Aorta (tissue), 5 donors: ENCODE measurements at regions of chr5 and their contacts with region 1.

Region 1: GRCh38 chr5:137310051-137310730 is 188.9 kb downstream of the SPOCK1 start:
- DNase-seq: no peak
- ATAC-seq: no peak
- H3K4me3 ChIP-seq: no peak overlapping the region
- H3K27ac ChIP-seq: no peak overlapping the region
- H3K4me1 ChIP-seq: no peaks in the 10 kb centered on the region
- H3K27me3 ChIP-seq: no peaks in the 10 kb centered on the region

Region 2: DNA sequence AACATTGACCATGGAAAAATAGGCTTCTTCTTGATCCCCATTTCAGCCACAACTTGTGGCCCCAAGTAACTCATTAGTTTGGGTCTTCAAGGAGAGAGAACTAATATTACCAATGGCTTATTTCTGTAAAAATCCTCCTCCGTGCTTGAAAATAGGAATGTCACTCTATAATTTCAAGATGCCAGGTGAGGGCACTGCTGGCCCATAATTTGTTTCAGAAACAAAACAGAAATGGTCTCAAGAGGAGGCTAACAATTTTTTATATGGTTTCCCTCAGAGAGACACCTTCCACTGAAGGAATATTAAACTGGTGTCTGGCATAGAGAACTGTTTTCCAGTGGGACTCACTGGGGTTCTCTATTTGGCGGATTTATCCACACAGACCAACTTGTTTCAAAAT is 507.8 kb before region 1 on chr5:
- intact Hi-C with region 1: loop called in 1 of 2 experiments (anchors 10 kb)
- DNase-seq: no peak
- ATAC-seq: no peak
- H3K4me3 ChIP-seq: no peak overlapping the region
- H3K27ac ChIP-seq: no peak overlapping the region
- H3K4me1 ChIP-seq: no peaks in the 10 kb centered on the region
- H3K27me3 ChIP-seq: no peaks in the 10 kb centered on the region

Region 3: DNA sequence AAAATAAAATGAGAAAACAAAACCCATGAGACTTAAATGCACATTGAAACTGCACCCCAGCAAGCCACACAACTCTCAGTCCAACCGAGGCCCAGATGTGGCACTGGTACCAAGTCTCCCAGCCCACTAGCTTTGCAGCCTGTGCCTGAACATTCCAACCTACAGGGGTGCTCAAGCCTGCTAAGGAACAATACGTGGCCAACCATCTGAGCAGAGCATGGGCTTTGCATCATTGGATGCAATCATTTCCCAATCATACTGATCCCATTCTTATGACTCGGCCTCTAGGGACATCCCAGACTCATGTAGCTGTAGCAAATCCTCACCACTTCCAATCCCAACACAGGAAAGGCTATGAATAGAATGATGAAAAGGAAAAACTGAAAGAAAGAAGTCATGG is 108.3 kb before region 1 on chr5:
- intact Hi-C with region 1: loop called in 1 of 2 experiments (anchors 5 kb)
- DNase-seq: peak in 1 of 2 donors; percentile 50
- ATAC-seq: peak; percentile 80
- H3K4me3 ChIP-seq: no peak overlapping the region
- H3K27ac ChIP-seq: no peak overlapping the region
- H3K4me1 ChIP-seq: no peaks in the 10 kb centered on the region
- H3K27me3 ChIP-seq: no peaks in the 10 kb centered on the region

Region 4: DNA sequence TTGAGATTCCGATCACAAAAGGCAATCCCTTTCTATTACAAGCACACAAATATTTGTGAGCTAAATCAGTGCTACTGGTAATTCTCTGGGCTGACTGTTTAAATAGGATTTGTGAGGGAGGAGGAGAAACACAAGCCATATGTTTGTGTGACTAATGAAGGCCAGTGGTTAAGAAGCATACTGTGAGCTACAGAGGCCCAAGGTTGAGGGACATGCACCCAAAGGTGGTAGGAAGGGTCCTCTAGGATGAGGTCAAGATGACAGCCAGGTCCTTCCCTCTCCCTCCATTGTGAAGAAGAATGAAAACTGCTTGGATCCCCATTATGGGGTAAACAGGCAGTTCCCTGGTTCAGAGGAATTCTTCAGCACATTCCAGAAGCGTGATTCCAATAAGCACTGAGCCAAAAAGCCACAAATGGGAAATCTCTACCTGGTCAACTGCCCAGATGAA is 105.1 kb after region 1 on chr5:
- intact Hi-C with region 1: no loop called
- DNase-seq: no peak
- ATAC-seq: no peak
- H3K4me3 ChIP-seq: no peak overlapping the region
- H3K27ac ChIP-seq: no peak overlapping the region
- H3K4me1 ChIP-seq: no peaks in the 10 kb centered on the region
- H3K27me3 ChIP-seq: no peaks in the 10 kb centered on the region

Region 5: DNA sequence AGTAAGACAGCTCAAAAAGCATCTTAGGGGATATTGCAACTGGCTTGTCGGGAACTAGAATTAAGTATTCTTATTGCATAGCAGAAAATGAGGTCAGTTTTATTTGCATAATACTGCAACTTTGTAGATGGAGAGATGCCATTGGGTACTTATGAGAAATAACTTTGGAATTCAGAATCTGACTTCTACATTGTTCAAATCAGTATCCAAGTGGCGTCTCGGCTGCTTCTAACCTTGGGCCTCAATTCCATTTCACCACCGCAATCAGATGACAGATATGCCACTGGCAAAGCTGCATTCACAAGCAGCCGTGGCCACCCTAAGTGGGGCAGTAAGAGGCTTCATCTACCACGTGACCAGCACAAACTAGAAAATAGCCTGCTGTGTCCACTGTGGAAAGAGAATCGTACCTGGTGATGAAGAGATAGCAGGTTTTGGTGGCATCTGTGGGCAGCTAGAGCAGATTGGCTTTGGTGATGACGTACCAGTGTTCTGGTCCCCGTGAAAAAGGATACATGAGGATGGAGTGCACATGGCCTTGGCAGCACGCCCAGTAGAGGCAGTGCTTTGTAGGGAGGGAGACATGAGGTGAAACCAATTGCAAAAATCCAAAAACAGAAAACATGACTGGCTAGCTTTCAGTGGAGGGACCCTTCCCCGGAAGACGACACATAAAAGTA is 309.1 kb after region 1 on chr5:
- intact Hi-C with region 1: loop called in 1 of 2 experiments (anchors 10 kb)
- DNase-seq: peak; percentile 69 to 87
- ATAC-seq: peak; percentile 31
- H3K4me3 ChIP-seq: no peak overlapping the region
- H3K27ac ChIP-seq: peak overlapping the region; percentile 10 to 73
- H3K4me1 ChIP-seq: peaks cover 5 to 15% of the 10 kb centered on the region in 2 donors
- H3K27me3 ChIP-seq: no peaks in the 10 kb centered on the region

Region 6: GRCh38 chr5:138192826-138193225 is 882.6 kb after region 1 on chr5:
- intact Hi-C with region 1: no loop called
- DNase-seq: no peak
- ATAC-seq: no peak
- H3K4me3 ChIP-seq: no peak overlapping the region
- H3K27ac ChIP-seq: no peak overlapping the region
- H3K4me1 ChIP-seq: no peaks in the 10 kb centered on the region
- H3K27me3 ChIP-seq: no peaks in the 10 kb centered on the region